A673 (cell line): ENCODE measurements at regions of chr11 and their contacts with region 1.

Region 1: GRCh38 chr11:117426269-117426685 is 98.6 kb downstream of the CEP164 start:
- DNase-seq: peak; percentile 73
- H3K4me3 ChIP-seq: no peak overlapping the region
- H3K27ac ChIP-seq: no peak overlapping the region
- H3K4me1 ChIP-seq: no peaks in the 10 kb centered on the region
- H3K27me3 ChIP-seq: no peaks in the 10 kb centered on the region
- CTCF ChIP-seq: peak; percentile 100

Region 2: DNA sequence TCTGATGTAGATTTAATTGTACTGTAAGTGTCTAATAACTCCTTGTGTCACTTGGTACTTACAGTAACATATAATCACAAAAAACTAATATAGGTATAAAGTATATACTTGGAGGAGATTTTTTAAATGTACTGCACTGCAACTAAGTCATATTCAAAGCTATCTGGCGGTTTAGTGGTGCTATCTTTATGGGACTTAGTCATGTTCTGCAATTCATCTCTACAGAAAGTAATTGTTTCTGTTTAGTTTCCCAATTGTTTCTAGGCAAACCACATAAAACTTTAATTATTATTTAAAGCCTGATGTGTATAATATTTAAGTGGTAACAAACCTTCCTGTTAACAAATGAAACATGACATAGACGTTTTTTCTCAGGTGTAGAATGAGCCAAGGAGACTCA is 274.2 kb before region 1 on chr11:
- CTCF ChIA-PET with region 1: no interaction called
- POLR2A ChIA-PET with region 1: no interaction called
- intact Hi-C with region 1: no loop called
- DNase-seq: no peak
- H3K4me3 ChIP-seq: no peak overlapping the region
- H3K27ac ChIP-seq: no peak overlapping the region
- H3K4me1 ChIP-seq: peaks cover 6% of the 10 kb centered on the region
- H3K27me3 ChIP-seq: no peaks in the 10 kb centered on the region
- CTCF ChIP-seq: no peak

Region 3: DNA sequence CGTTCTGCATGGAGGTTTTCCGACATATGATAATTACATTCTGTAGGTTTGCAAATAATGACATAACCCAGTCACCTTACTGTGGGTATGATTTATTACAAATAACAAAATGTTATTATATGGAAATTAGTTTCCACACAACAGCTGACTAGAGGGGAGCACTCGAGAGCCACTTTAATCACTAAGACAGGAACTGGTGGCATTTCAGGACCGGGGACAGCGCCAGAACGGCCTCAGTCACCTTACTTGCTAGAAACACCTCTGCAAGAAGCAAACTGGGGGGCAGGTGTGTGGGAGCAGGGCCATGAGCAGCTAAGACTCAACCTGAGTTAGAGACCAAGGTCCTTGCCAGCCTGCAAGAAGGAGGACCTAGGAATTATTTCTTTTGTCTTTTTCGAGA is 170.8 kb after region 1 on chr11:
- CTCF ChIA-PET with region 1: interaction called, 3 read pairs
- POLR2A ChIA-PET with region 1: no interaction called
- intact Hi-C with region 1: loop called (anchors 5 kb)
- DNase-seq: peak; percentile 41
- H3K4me3 ChIP-seq: no peak overlapping the region
- H3K27ac ChIP-seq: no peak overlapping the region
- H3K4me1 ChIP-seq: no peaks in the 10 kb centered on the region
- H3K27me3 ChIP-seq: peaks cover 10% of the 10 kb centered on the region
- CTCF ChIP-seq: no peak

Region 4: DNA sequence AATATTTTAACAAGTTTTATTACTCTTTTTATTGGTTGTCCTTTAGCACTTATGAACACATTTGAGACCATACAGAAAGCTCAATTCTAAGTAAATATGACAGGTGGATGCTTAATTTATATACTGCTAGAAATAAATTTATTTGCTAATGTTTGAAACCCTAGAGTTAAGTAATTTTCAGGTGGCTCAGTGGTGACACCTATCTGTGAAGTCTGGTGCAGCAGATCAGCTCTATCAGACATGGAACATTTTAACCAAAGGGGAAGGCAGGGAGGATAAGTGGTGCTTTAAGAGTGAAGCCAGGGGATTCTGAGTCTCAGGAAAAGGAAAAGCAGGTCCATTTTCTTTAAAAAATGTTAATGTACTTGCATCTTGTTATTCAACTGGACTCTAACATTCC is 194.9 kb after region 1 on chr11:
- CTCF ChIA-PET with region 1: interaction called, 12 read pairs
- POLR2A ChIA-PET with region 1: no interaction called
- intact Hi-C with region 1: no loop called
- DNase-seq: peak; percentile 14
- H3K4me3 ChIP-seq: no peak overlapping the region
- H3K27ac ChIP-seq: no peak overlapping the region
- H3K4me1 ChIP-seq: no peaks in the 10 kb centered on the region
- H3K27me3 ChIP-seq: peaks cover 10% of the 10 kb centered on the region
- CTCF ChIP-seq: peak; percentile 67

Region 5: DNA sequence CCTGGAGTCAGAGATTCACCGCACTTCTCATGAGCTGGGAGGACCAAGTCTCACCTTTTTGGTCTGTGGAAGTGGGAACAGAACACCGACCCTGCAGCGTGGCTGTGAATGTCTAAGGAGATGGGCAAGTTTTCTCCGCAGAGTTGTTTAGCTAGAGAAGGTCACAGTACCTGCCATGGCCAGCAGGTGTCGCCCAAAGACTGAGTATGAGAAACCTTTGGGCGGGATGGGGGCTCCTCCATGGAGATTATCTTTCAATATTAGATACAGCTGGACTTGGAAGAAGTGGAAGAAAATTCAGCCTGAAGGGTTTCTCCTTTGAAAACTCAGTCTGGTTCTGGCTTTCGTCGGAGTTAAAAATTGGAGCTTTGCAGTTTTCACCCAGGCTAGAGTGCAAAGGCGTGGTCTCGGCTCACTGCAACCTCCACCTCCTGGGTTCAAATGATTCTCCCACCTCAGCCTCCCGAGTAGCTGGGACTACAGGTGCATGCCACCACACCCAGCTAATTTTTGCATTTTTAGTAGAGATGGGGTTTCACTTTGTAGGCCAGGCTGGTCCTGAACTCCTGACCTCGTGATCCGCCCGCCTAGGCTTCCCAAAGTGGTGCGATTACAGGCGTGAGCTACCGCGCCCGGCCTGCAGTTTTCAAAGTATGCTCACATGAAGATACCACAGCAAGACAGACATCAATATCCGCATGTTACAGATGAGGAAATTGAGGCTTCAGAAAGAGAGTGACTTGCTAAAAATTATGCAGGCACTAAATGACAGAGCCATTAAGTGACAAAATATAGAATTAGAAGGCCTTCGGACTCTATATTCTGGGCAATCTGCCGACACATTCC is 381.4 kb after region 1 on chr11:
- CTCF ChIA-PET with region 1: interaction called, 59 read pairs
- POLR2A ChIA-PET with region 1: no interaction called
- intact Hi-C with region 1: loop called (anchors 2 kb)
- DNase-seq: peak; percentile 83
- H3K4me3 ChIP-seq: no peak overlapping the region
- H3K27ac ChIP-seq: no peak overlapping the region
- H3K4me1 ChIP-seq: peaks cover 11% of the 10 kb centered on the region
- H3K27me3 ChIP-seq: peaks cover 3% of the 10 kb centered on the region
- CTCF ChIP-seq: peak; percentile 93

Region 6: DNA sequence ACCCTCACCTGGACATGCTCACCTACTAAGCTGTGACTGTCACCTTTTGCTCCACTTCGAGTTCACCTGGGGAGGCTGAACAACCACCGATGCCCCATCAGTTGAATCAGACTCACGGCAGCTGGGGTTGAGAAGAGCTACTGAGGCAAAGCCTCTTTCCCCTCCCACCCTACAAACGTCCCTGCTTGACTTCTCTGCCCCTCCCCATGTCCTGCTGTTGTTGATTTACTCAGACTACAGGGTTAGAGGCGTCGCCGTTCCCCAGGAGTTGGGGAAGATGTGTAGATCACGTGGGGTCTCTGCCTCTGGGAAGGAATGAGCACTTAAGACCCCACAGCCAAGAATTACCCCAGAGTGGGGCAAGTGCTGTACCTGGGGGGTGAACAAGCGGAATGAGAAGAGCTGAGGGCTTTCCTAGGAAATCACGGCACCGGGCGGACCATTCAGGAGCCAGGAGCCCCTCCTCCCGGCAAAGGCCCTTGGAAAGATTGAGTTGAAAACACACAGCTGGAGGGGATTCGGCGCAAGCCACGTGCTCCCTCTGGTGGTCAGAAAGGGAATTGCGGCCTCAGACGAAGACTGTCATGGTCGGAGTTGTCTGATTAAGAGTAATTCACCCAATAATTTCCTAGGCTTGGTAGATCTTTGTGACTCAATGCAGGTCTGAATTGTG is 391.2 kb after region 1 on chr11:
- CTCF ChIA-PET with region 1: interaction called, 40 read pairs
- POLR2A ChIA-PET with region 1: no interaction called
- intact Hi-C with region 1: loop called (anchors 2 kb)
- DNase-seq: peak; percentile 89
- H3K4me3 ChIP-seq: no peak overlapping the region
- H3K27ac ChIP-seq: no peak overlapping the region
- H3K4me1 ChIP-seq: peaks cover 35% of the 10 kb centered on the region
- H3K27me3 ChIP-seq: no peaks in the 10 kb centered on the region
- CTCF ChIP-seq: peak; percentile 99

Region 7: GRCh38 chr11:118051611-118052461 is 625.6 kb after region 1 on chr11:
- CTCF ChIA-PET with region 1: no interaction called
- POLR2A ChIA-PET with region 1: no interaction called
- intact Hi-C with region 1: loop called (anchors 10 kb)
- DNase-seq: no peak
- H3K4me3 ChIP-seq: no peak overlapping the region
- H3K27ac ChIP-seq: no peak overlapping the region
- H3K4me1 ChIP-seq: no peaks in the 10 kb centered on the region
- H3K27me3 ChIP-seq: peaks cover 26% of the 10 kb centered on the region
- CTCF ChIP-seq: no peak

Region 8: GRCh38 chr11:119352857-119353260 is 1926.6 kb after region 1 on chr11:
- CTCF ChIA-PET with region 1: no interaction called
- POLR2A ChIA-PET with region 1: no interaction called
- intact Hi-C with region 1: no loop called
- DNase-seq: no peak
- H3K4me3 ChIP-seq: no peak overlapping the region
- H3K27ac ChIP-seq: no peak overlapping the region
- H3K4me1 ChIP-seq: no peaks in the 10 kb centered on the region
- H3K27me3 ChIP-seq: no peaks in the 10 kb centered on the region
- CTCF ChIP-seq: no peak